ENCODE measurements at regions of chr17 and their contacts with region 1.

Region 1: DNA sequence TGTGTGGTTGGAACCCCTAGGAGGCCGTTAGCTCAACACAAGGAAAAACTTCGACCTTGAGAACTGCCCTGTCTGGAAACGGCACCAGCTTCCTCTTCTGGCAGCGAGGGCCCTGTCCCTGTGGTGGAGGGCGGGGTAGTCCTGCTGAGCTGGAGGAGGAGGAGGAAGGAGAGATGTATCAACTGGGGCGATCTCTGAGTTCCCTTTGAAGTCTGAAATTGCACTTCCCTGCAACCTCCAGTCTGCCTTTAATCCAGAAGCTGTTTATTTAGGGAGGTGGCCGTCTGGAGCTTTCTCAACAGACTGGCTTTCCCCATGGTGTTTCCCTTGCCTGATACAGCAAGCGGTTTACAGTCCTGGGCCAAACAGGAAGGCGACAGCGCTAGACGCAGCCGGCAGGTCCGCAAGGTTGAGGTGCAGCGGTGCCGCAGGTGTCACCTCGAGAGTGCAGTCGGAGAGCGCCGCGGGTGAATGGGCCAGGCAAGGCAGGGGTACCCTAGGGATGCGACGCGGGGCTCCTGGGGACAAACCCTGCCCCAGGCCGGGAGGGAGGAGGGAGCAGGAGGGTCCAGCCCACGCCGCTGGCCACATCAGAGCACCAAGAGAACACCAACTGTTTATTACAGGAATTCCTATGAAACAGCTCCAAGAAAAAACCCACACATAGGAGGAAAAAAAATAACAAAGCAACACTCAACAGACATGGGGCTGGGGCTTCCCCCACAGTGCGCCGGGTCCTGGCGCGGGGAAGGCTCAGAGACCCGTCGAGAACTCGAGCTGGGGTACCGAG is 11.4 kb upstream of the MRPS23 start:
- DNase-seq: no peak
- ATAC-seq: peak; percentile 67
- H3K4me3 ChIP-seq: peak overlapping the region; percentile 38; the same call in 1 of the 2 replicates
- H3K27ac ChIP-seq: no peak overlapping the region
- H3K4me1 ChIP-seq: peaks cover 3% of the 10 kb centered on the region; the same call in 1 of the 2 replicates
- H3K27me3 ChIP-seq: no peaks in the 10 kb centered on the region; a peak in 2 of 4 replicates
- CTCF ChIP-seq: no peak
- EP300 ChIP-seq: no peak
- POLR2A ChIP-seq: no peak
- RAD21 ChIP-seq: no peak

Region 2: DNA sequence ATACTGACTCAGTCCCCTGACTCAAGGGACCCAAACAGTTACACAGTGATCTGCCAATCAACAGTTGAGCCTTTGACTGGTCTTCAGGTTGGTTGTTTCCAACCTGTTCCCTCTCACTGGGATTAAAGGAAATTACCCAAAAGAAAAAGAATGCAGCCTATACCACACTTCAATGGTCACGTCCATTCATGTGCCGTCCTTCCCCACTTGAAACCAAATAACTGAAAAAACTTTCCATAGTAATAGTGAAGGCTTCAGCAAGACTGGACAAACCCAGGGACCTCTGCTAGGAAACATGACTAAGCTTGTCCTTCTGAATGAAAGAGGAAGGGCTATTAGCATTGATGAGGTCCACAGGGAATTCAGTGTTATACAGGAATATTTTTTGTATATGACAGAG is 41.9 kb before region 1 on chr17:
- CTCF ChIA-PET with region 1: no interaction called
- POLR2A ChIA-PET with region 1: no interaction called
- RAD21 ChIA-PET with region 1: no interaction called
- SMC1A ChIA-PET with region 1: no interaction called
- in situ Hi-C with region 1: no loop called
- intact Hi-C with region 1: no loop called
- DNase-seq: no peak
- ATAC-seq: no peak
- H3K4me3 ChIP-seq: no peak overlapping the region
- H3K27ac ChIP-seq: no peak overlapping the region
- H3K4me1 ChIP-seq: no peaks in the 10 kb centered on the region
- H3K27me3 ChIP-seq: no peaks in the 10 kb centered on the region; a peak in 1 of 4 replicates
- CTCF ChIP-seq: no peak
- EP300 ChIP-seq: no peak
- POLR2A ChIP-seq: no peak
- RAD21 ChIP-seq: no peak

Region 3: GRCh38 chr17:57849874-57850754 is 11.1 kb before region 1 on chr17 and contains the start of gene MRPS23:
- CTCF ChIA-PET with region 1: interaction called, 25 read pairs
- POLR2A ChIA-PET with region 1: interaction called, 3 read pairs
- RAD21 ChIA-PET with region 1: interaction called, 3 read pairs
- SMC1A ChIA-PET with region 1: interaction called, 20 read pairs
- in situ Hi-C with region 1: no loop called
- intact Hi-C with region 1: no loop called
- DNase-seq: peak; percentile 92
- ATAC-seq: peak; percentile 97
- H3K4me3 ChIP-seq: peak within 1 kb of the TSS; percentile 96
- H3K27ac ChIP-seq: peak within 1 kb of the TSS; percentile 74
- H3K4me1 ChIP-seq: peaks cover 8% of the 10 kb centered on the region
- H3K27me3 ChIP-seq: no peaks in the 10 kb centered on the region
- CTCF ChIP-seq: no peak
- EP300 ChIP-seq: peak; percentile 6 to 46; a peak in 1 of 4 replicates
- POLR2A ChIP-seq: peak; percentile 95
- RAD21 ChIP-seq: no peak
- polyA plus RNA-seq, gene MRPS23: 186 to 237 TPM

Region 4: GRCh38 chr17:57892146-57892828 is 31.1 kb after region 1 on chr17:
- CTCF ChIA-PET with region 1: interaction called, 47 read pairs
- POLR2A ChIA-PET with region 1: no interaction called
- RAD21 ChIA-PET with region 1: interaction called, 11 read pairs
- SMC1A ChIA-PET with region 1: interaction called, 7 read pairs
- in situ Hi-C with region 1: no loop called
- intact Hi-C with region 1: loop called (anchors 5 kb)
- DNase-seq: no peak
- ATAC-seq: peak; percentile 91
- H3K4me3 ChIP-seq: no peak overlapping the region
- H3K27ac ChIP-seq: no peak overlapping the region
- H3K4me1 ChIP-seq: peaks cover 19% of the 10 kb centered on the region
- H3K27me3 ChIP-seq: no peaks in the 10 kb centered on the region
- CTCF ChIP-seq: peak; percentile 91 to 99 (median 99)
- EP300 ChIP-seq: no peak
- POLR2A ChIP-seq: no peak
- RAD21 ChIP-seq: peak; percentile 88

Region 5: GRCh38 chr17:57946798-57947358 is 85.7 kb after region 1 on chr17:
- CTCF ChIA-PET with region 1: interaction called, 6 read pairs
- POLR2A ChIA-PET with region 1: no interaction called
- RAD21 ChIA-PET with region 1: interaction called, 9 read pairs
- SMC1A ChIA-PET with region 1: interaction called, 15 read pairs
- in situ Hi-C with region 1: no loop called
- intact Hi-C with region 1: no loop called
- DNase-seq: peak; percentile 73
- ATAC-seq: peak; percentile 90
- H3K4me3 ChIP-seq: peak overlapping the region; percentile 28; the same call in 1 of the 2 replicates
- H3K27ac ChIP-seq: no peak overlapping the region
- H3K4me1 ChIP-seq: peaks cover 54% of the 10 kb centered on the region
- H3K27me3 ChIP-seq: no peaks in the 10 kb centered on the region
- CTCF ChIP-seq: no peak
- EP300 ChIP-seq: no peak
- POLR2A ChIP-seq: no peak
- RAD21 ChIP-seq: no peak

Region 6: DNA sequence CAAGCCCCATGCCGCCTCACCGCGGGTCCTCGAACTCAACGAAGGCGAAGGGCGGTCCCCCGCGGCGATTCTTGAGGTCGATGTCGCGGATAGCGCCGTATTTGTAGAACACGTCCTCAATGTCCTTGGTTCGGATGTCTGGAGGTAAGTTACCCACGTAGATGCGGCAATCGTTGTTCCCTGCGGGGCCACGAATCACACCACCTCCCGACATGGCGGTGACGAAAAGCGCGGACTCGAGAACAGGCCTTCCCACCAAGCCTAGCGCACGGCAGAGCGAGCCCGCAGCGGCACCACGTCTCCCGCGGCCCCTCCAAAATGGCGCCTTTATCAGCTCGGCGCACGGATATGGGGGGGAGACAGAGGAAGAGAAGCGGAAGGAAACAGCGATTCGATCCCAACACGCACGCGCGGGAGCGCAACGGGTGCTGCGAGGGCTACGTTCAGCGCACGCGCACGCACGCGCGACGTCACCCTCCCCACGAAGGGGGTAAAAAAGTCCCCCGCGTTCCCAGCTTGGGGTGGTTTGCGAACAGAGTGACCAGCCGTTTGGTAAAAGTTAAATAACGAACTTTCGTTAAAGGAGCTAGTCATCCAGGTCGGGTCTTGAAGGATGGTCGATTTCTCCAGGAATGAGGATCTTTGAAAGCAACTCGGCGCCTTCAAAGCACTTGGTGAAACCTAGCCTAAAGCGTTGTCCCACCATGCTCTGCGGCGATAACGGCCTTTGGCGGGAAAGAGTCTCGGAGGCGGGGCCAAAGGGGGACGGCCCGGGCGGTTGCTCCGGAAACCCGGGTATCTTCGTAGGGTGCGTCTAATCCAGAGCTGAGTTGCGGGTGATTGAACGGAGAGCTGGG is 146.0 kb after region 1 on chr17 and contains the start of gene SRSF1:
- CTCF ChIA-PET with region 1: interaction called, 708 read pairs
- POLR2A ChIA-PET with region 1: no interaction called
- RAD21 ChIA-PET with region 1: interaction called, 239 read pairs
- SMC1A ChIA-PET with region 1: interaction called, 341 read pairs
- in situ Hi-C with region 1: no loop called
- intact Hi-C with region 1: no loop called
- DNase-seq: peak; percentile 97
- ATAC-seq: peak; percentile 91
- H3K4me3 ChIP-seq: peak within 1 kb of the TSS; percentile 98
- H3K27ac ChIP-seq: peak within 1 kb of the TSS; percentile 96
- H3K4me1 ChIP-seq: peaks cover 8% of the 10 kb centered on the region; the same call in 1 of the 2 replicates
- H3K27me3 ChIP-seq: no peaks in the 10 kb centered on the region
- CTCF ChIP-seq: no peak
- EP300 ChIP-seq: peak in 1 of 2 experiments; percentile 62; a peak in 2 of 4 replicates
- POLR2A ChIP-seq: peak; percentile 99
- RAD21 ChIP-seq: no peak
- polyA plus RNA-seq, gene SRSF1: 101 to 104 TPM